T-cell (primary cell): ENCODE measurements at regions of chrX and their contacts with region 1.

Region 1: DNA sequence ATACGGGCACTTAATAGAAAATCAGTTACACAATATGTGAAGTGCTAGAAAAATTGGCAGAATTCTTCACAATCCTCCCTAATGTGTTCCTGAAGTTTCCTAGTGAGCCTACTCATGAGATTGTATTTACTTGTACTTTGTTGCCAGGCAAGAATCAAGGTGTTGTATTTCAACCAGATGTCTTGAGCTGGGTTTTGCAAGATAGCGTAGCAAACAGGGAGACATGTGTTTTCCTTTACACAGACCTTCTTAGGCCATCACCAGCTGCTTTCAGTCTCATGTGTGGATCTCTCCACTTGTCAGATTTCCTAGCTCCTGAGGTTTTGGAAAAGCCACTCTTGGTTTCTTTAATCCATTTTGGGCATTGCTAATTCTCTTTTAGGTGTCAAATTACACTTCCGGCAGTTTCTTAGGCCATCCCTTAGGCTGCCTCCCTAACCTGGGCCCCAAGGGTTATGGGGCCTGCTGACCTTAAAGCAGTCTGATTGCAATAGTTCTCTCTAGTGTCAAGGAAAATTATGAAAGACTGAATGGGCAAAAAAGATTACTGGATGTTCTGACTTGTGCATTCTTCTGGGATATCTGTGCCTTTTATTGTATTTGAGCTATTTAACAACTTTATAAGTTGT is 12.2 kb upstream of the EDA start:
- DNase-seq: no peak
- ATAC-seq: no peak
- H3K4me3 ChIP-seq: no peak overlapping the region
- H3K4me3 Mint-ChIP-seq: no peak overlapping the region
- H3K27ac ChIP-seq: no peak overlapping the region
- H3K27ac Mint-ChIP-seq: no peak overlapping the region
- H3K4me1 ChIP-seq: no peaks in the 10 kb centered on the region
- H3K4me1 Mint-ChIP-seq: peaks cover 0 to 3% (median 0%) of the 10 kb centered on the region in 3 donors
- H3K27me3 ChIP-seq: no peaks in the 10 kb centered on the region
- H3K27me3 Mint-ChIP-seq: peaks cover 0 to 19% of the 10 kb centered on the region in 2 donors

Region 2: GRCh38 chrX:69489625-69490024 is 114.1 kb before region 1 on chrX:
- CTCF ChIA-PET with region 1: interaction called in 1 of 2 experiments, 10 read pairs
- POLR2A ChIA-PET with region 1: no interaction called
- DNase-seq: no peak
- ATAC-seq: no peak
- H3K4me3 ChIP-seq: no peak overlapping the region
- H3K4me3 Mint-ChIP-seq: no peak overlapping the region
- H3K27ac ChIP-seq: no peak overlapping the region
- H3K27ac Mint-ChIP-seq: no peak overlapping the region
- H3K4me1 ChIP-seq: no peaks in the 10 kb centered on the region
- H3K4me1 Mint-ChIP-seq: no peaks in the 10 kb centered on the region
- H3K27me3 ChIP-seq: no peaks in the 10 kb centered on the region
- H3K27me3 Mint-ChIP-seq: peaks cover 16 to 50% of the 10 kb centered on the region in 2 donors

Region 3: DNA sequence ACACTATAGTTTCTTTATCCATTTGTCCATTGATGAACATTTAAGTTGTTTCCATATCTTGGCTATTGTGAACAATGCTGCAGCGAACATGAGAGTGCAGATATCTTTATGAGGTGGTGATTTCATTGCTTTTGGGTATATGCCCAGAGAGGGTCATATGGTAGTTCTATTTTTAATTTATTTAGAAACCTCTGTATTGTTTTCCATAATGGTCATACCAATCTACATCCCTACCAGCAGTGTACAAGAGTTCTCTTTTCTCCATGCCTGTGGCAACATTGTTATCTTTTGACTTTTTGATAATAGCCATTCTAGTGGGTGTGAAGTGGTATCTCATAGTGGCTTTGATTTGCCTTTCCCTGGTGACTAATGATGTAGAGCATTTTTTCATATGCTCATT is 61.0 kb after region 1 on chrX:
- CTCF ChIA-PET with region 1: no interaction called
- POLR2A ChIA-PET with region 1: no interaction called
- DNase-seq: no peak
- ATAC-seq: no peak
- H3K4me3 ChIP-seq: no peak overlapping the region
- H3K4me3 Mint-ChIP-seq: no peak overlapping the region
- H3K27ac ChIP-seq: no peak overlapping the region
- H3K27ac Mint-ChIP-seq: no peak overlapping the region
- H3K4me1 ChIP-seq: no peaks in the 10 kb centered on the region
- H3K4me1 Mint-ChIP-seq: no peaks in the 10 kb centered on the region
- H3K27me3 ChIP-seq: no peaks in the 10 kb centered on the region
- H3K27me3 Mint-ChIP-seq: peaks cover 0 to 3% of the 10 kb centered on the region in 2 donors